ENCODE measurements at regions of chr6 and their contacts with region 1.

Region 1: DNA sequence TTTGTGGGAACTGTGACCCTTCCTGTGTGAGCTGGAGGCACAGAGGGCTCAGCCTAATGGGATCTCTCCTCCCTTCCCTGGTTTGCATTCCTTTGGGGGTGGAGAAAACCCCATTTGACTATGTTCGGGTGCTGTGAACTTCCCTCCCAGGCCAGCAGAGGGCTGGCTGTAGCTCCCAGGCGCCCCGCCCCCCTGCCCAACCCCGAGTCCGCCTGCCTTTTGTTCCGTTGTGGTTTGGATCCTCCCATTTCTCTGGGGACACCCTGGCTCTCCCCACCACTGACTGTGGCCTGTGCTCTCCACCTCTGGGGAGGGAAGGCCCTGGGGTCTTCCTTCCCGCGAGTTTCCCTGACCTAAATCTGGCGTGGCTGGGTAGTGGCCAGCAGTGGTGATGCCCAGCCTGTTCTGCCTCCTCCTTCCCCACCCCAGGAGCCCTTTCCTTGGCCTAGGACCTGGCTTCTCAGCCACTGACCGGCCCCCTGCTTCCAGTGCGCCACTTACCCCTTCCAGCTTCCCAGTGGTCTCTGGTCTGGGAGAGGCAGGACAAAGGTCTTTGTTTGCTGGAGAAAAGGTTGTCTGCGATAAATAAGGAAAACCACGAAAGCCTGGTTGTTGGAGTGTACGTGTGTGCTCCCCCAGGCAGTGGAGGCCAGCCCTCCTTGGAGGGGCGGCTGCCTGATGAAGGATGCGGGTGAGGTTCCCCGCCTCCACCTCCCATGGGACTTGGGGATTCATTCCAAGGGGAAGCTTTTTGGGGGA is 4.9 kb downstream of the VEGFA start:
- DNase-seq: peak; percentile 88
- CTCF ChIP-seq: peak; percentile 70

Region 2: GRCh38 chr6:43247113-43247999 is 527.6 kb before region 1 on chr6:
- CTCF ChIA-PET with region 1: no interaction called
- POLR2A ChIA-PET with region 1: no interaction called
- DNase-seq: peak; percentile 97
- CTCF ChIP-seq: no peak

Region 3: DNA sequence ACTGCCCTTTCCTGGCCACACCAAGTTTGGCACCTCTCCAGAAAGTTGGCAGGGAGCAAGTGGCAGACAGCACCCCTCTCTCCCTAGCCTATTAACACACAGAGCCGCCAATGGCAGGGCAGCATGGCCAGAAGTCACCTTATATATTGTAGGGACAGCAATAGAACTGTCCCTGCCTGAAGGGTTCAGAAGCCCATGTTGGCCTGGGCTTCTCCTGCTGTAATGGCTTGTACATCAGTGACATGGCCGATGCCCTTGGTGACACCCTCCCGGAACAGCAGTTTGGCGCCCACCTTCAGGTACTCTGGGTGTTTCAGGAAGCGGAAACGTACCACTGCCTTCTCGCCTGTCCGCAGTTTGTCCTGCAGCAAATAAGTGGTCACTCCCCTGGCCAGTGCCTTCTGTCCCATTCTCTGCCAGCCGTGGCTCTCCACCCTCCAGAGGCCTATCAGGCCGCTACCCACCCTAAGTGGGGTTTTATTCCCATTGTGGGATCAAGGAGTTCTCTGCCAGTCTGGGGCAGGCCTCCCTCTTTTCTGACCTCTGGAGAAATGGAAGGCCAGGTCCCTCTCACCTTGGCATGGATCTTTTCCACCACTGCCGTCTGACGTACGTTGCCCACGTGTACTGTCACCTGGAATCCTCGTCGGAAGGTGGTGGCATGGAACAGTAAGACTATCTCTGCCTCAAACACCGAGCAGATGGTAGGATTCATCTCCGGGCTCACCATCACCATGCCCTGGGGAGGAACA is 153.3 kb before region 1 on chr6:
- CTCF ChIA-PET with region 1: no interaction called
- POLR2A ChIA-PET with region 1: no interaction called
- DNase-seq: no peak
- CTCF ChIP-seq: no peak

Region 4: DNA sequence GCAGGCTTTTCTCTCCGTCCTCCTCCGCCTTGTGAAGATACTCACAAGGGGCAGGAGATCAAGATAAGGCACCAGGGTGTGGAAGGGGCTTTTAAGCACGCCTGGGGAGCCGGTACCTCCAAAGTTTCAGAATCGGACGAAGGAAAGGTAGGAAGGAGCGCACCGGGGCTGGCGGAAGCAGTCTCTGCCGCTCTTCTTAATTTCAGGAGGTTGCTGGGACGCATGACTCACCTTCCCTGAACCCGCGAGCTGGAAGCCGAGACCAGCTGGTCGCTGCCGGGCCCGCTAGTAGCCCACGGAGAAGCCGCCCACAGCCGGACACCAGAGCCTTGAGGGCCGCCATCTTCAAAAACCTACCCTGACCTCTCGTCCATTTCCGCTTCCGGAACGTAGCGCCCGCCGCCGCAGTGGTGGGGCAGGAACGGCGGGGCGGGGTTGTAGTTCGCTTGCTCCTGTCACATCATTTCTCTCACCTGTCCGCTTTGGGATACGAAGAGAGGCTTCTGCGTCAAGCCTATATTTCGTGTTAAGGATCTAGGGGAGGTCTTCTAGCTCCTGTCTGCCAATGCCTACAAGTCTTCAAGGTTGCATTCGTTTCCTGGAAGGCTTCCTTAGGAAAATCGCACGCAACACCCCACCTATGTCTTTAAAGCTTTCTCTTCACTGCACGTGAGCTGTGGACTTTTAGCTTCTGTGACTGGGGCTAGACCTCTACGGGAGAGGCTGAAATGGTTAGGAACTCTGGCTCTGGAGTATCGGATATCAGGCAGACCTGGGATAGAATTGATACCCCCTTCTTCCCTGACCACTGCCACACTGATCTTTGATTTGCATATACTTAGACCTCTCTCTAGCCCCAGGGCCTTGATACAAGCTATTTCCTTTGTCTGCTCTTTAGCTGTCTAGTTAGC is 87.3 kb before region 1 on chr6 and contains the start of gene MRPS18A:
- CTCF ChIA-PET with region 1: interaction called, 17 read pairs
- POLR2A ChIA-PET with region 1: no interaction called
- DNase-seq: peak; percentile 90
- CTCF ChIP-seq: no peak

Region 5: GRCh38 chr6:43758617-43759050 is 16.3 kb before region 1 on chr6:
- CTCF ChIA-PET with region 1: interaction called, 142 read pairs
- POLR2A ChIA-PET with region 1: no interaction called
- DNase-seq: peak; percentile 68
- CTCF ChIP-seq: peak; percentile 77

Region 6: GRCh38 chr6:43791745-43792422 is 16.9 kb after region 1 on chr6:
- CTCF ChIA-PET with region 1: interaction called, 23 read pairs
- POLR2A ChIA-PET with region 1: no interaction called
- DNase-seq: no peak
- CTCF ChIP-seq: no peak

Region 7: DNA sequence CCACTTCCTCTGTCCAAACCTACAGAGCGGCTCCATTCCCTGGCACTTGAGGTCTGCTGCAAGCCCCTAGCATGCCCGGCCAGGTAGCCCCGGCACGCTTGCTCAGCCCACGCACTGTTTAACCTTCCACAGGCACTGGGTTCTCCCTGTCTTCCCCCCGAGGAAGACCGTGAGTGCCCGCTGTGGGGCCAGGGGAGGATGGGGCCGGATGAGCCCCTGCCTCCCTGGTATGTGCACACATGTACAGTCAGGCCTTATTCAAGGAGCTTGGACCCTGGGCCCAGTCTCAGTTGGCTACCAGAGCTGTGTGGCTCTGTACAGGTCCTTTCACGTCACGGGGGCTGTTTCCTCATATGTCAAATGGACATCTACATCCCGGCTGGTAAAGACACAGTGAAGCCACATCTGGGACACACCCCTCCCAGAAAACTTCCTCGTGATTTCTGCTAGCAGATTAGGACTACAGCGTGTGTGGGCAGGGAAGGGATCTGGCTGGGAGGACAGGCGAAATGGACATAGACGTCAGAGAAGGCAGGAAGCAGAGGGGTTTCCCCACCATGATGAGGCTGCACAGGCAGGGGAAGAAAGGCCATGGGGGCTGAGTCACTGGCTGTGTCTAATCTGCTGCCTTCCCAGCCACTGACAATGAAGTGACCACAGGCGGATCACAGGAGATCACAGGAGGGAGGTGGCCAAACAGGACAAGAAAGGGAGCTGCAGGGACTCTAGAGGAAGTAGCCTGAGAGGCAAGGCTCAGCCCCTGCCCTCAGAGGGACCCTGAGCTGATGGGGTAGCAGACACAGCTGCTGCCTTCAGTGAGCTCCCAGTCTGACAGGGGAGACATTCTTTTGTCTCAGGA is 289.4 kb after region 1 on chr6:
- CTCF ChIA-PET with region 1: interaction called, 21 read pairs
- POLR2A ChIA-PET with region 1: no interaction called
- DNase-seq: peak; percentile 62
- CTCF ChIP-seq: no peak